ENCODE measurements at regions of chr17 and their contacts with region 1.

Region 1: DNA sequence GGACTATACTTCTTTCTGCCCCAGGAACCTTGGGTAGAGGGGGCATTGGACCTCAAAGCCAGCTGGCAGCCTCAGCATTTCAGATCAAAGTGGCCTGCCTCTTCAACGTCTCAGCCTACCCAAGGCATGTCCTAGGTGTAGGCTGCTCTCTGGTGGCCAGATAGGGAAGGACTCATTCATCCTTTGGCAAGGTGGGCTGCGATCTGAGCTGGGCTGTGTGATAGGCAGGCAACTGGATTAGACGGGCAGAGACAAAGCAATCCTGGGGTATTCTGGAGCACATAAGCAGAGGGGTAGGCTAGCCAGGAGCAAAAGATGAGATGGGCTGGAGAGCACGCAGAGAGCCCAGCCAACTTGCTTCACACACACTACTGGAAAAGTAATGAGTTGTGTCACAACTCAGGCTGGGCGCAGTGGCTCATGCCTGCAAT is 8.8 kb upstream of the NAGLU start:
- DNase-seq: peak; percentile 78
- H3K4me3 ChIP-seq: no peak overlapping the region; a peak in 1 of 4 replicates
- H3K27ac ChIP-seq: peak overlapping the region in 1 of 2 experiments; percentile 100; a peak in 2 of 4 replicates
- H3K4me1 ChIP-seq: peaks cover 2 to 15% of the 10 kb centered on the region in 2 experiments; a peak in 2 of 4 replicates
- H3K27me3 ChIP-seq: no peaks in the 10 kb centered on the region
- CTCF ChIP-seq: peak; percentile 87
- EP300 ChIP-seq: no peak
- RAD21 ChIP-seq: peak; percentile 87

Region 2: DNA sequence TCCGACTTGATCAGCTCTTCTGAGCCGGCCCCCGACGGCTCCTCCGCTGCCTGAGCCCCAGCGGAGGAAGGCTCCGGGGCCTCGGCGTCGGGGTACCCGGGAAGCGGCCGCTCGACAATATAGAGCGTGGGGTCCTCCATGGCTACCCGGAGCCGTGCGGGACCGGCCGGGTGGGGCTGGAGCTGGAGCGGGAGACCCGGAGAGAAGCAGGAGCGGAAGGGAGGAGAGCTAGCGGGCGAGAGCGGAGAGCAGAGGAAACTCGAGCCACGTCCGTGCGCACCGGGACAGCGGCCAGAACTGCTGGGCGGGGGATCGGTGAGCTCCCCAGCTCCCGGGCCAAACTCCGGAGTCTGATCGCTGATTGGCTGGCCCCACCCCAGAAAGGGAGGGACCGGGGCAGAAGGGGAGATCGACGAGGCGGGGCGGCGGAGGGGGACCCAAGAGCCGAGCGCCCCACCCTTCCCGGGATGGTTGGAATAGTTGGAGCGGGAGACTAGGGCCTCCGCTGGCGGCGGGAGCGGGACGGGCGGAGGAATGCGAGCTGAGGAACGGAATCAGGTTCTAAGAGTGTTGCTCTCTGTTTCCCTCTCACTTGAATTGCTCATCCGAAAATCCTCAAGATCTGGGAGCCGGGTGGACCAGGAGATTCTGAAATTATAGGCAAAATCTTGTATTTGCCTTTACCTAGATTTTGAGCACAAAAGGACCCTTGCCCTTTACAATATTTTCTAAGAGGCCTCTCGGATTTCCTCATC is 104.2 kb before region 1 on chr17 and contains the start of gene CAVIN1:
- CTCF ChIA-PET with region 1: interaction called, 13 read pairs
- POLR2A ChIA-PET with region 1: no interaction called
- DNase-seq: peak; percentile 83
- H3K4me3 ChIP-seq: peak within 1 kb of the TSS; percentile 66 to 100
- H3K27ac ChIP-seq: peak within 1 kb of the TSS; percentile 70 to 94
- H3K4me1 ChIP-seq: peaks cover 4 to 10% of the 10 kb centered on the region in 2 experiments; a peak in 2 of 4 replicates
- H3K27me3 ChIP-seq: no peaks in the 10 kb centered on the region
- CTCF ChIP-seq: no peak
- EP300 ChIP-seq: peak in 1 of 2 experiments; percentile 54; a peak in 1 of 4 replicates
- RAD21 ChIP-seq: no peak
- polyA plus RNA-seq, gene CAVIN1: 264 and 290 TPM in 2 replicates

Region 3: DNA sequence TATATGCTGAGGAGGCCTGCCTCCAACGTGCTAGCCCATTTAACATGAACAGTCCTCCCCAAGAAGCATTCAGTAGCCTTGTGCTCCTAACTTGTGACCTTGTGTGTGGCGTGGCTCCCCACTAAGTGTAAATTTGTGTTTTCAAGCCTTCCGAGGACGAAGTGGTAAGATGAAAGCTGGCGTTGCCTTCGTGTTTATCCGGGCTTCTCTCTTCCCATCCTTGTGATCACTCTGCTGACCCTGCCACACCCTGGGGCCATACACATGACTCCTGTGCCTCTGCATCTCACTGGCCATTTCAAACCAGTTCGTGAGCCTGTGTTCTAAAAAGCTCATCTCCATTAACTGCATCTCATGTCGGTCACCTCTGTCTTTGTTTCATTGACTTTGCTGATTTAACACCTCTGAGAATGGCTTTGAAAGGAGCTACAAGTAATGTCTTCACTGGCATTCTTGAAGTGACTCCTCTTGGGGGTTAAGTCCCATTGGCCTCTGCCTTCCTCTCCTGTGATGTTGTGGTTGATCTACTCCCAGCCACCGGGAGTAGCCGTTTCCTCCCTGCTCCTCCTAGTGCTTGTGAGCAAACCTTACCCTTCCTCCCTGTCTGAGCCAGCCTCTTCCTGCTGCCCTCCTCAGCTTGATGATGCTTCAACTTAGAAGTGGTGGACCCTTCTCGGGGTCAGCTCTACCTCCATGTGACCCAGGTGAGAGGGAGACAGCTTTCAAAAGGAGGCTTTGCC is 18.7 kb before region 1 on chr17:
- CTCF ChIA-PET with region 1: interaction called, 22 read pairs
- POLR2A ChIA-PET with region 1: interaction called, 3 read pairs
- DNase-seq: no peak
- H3K4me3 ChIP-seq: no peak overlapping the region
- H3K27ac ChIP-seq: no peak overlapping the region
- H3K4me1 ChIP-seq: no peaks in the 10 kb centered on the region
- H3K27me3 ChIP-seq: no peaks in the 10 kb centered on the region
- CTCF ChIP-seq: no peak
- EP300 ChIP-seq: no peak
- RAD21 ChIP-seq: no peak

Region 4: DNA sequence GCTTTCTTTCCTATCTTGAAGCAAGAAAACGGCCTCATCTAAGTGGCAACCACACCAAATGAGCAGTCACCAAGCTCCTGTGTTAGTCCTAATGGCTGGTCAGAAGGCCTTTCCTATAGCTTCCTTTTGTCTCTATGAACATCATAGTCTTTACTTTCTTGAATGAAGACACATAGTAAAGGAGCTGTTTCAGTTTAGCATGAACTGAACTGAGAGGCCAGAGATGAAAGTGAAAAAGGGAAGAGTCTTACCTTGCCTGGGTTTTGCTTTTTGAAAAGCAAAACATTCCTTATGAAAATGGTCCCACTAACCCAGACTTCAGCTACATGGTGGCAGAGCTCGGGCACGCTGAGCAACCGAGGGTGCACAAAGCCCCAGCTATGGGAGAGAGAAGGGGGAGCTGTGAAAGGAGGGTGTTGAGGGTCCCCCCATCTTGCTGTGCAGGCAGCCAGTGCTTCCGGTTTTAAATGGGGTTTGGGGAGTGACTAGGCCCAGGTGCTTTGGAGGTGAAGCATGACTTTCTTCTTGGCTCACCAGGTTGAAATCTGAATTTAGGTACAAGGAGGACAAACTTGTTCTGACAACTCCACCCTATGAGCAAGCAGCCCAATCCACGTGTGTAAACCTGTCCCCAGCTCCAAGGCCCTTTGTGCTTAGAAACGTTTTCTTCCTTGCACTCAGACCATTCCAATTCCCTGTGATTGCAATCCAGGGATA is 59.4 kb after region 1 on chr17:
- CTCF ChIA-PET with region 1: no interaction called
- POLR2A ChIA-PET with region 1: no interaction called
- DNase-seq: no peak
- H3K4me3 ChIP-seq: no peak overlapping the region
- H3K27ac ChIP-seq: no peak overlapping the region
- H3K4me1 ChIP-seq: no peaks in the 10 kb centered on the region
- H3K27me3 ChIP-seq: no peaks in the 10 kb centered on the region
- CTCF ChIP-seq: no peak
- EP300 ChIP-seq: no peak
- RAD21 ChIP-seq: no peak

Region 5: GRCh38 chr17:42618442-42619150 is 91.3 kb after region 1 on chr17:
- CTCF ChIA-PET with region 1: no interaction called
- POLR2A ChIA-PET with region 1: no interaction called
- DNase-seq: peak; percentile 55
- H3K4me3 ChIP-seq: no peak overlapping the region
- H3K27ac ChIP-seq: peak overlapping the region in 1 of 2 experiments; percentile 71; a peak in 2 of 4 replicates
- H3K4me1 ChIP-seq: peaks cover 0 to 16% of the 10 kb centered on the region in 2 experiments; a peak in 1 of 4 replicates
- H3K27me3 ChIP-seq: no peaks in the 10 kb centered on the region
- CTCF ChIP-seq: no peak
- EP300 ChIP-seq: no peak
- RAD21 ChIP-seq: peak; percentile 61